ENCODE measurements at regions of chr4 and their contacts with region 1.

Region 1: GRCh38 chr4:53043891-53044650 is 182.0 kb downstream of the RASL11B start:
- DNase-seq: no peak
- ATAC-seq: no peak; the same call in 1 of the 2 replicates
- H3K4me3 ChIP-seq: no peak overlapping the region
- H3K27ac ChIP-seq: no peak overlapping the region
- H3K4me1 ChIP-seq: no peaks in the 10 kb centered on the region
- H3K27me3 ChIP-seq: no peaks in the 10 kb centered on the region
- CTCF ChIP-seq: no peak

Region 2: DNA sequence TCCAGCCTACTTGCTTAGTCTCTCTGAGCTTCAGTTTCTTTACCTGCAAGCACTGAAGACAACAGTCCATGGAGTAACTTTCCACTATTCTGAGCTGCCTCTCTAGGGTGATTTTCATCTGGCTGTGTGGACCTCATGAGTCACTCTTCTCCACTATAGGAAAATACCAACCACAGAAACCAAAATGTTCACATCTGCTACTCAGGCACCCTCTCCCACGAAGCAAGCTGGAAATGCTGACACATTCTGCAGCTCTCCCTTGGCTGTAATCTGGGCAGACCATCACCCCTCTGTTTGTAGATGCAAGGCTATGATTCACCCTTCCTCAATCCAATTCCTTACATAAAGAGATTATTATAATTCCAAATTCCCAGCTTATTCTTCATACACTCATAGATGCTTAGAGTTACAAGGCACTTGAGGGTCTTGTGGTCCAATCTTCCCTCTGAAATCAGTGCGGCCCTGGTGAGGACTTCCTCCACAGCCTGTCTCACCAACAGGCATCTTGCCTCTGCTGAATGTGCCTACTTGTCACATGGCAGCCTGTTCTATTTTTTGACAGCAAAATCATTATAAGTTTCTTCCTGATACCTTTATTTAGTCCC is 644.2 kb after region 1 on chr4:
- CTCF ChIA-PET with region 1: interaction called, 11 read pairs
- POLR2A ChIA-PET with region 1: no interaction called
- intact Hi-C with region 1: no loop called
- DNase-seq: peak; percentile 96
- ATAC-seq: peak; percentile 97
- H3K4me3 ChIP-seq: no peak overlapping the region
- H3K27ac ChIP-seq: peak overlapping the region; percentile 67
- H3K4me1 ChIP-seq: peaks cover 11% of the 10 kb centered on the region
- H3K27me3 ChIP-seq: no peaks in the 10 kb centered on the region
- CTCF ChIP-seq: no peak

Region 3: GRCh38 chr4:54268151-54268550 is 1224.1 kb after region 1 on chr4:
- CTCF ChIA-PET with region 1: interaction called, 26 read pairs
- POLR2A ChIA-PET with region 1: no interaction called
- intact Hi-C with region 1: no loop called
- DNase-seq: no peak
- ATAC-seq: no peak
- H3K4me3 ChIP-seq: no peak overlapping the region
- H3K27ac ChIP-seq: no peak overlapping the region
- H3K4me1 ChIP-seq: no peaks in the 10 kb centered on the region
- H3K27me3 ChIP-seq: no peaks in the 10 kb centered on the region
- CTCF ChIP-seq: no peak